ENCODE measurements at regions of chr6 and their contacts with region 1.

Region 1: DNA sequence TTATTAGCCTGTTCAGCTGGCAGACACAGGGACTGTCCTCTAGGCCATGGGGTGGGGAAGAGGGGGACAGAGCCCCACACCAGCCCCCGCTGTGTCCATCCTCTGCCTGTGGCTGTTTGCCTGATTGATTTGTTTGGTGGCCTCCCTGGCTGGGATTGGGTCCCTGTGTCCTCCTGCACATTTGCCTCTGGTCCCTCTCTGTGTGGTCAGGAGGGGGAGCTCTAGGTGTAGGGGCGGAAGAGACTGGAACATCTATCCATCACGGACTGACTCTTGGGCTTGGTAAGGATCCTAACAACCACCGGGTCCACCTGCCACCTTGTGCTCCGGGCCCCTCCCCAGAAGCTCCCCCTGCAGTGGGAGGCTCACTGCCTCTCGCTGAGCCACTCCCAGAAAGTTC is 38.4 kb upstream of the CCDC167 start:
- DNase-seq: peak; percentile 20
- H3K4me3 ChIP-seq: no peak overlapping the region
- H3K27ac ChIP-seq: no peak overlapping the region
- H3K4me1 ChIP-seq: peaks cover 7% of the 10 kb centered on the region
- H3K27me3 ChIP-seq: peaks cover 47 to 48% of the 10 kb centered on the region in 2 experiments
- CTCF ChIP-seq: peak; percentile 33 to 53
- POLR2A ChIP-seq: no peak

Region 2: DNA sequence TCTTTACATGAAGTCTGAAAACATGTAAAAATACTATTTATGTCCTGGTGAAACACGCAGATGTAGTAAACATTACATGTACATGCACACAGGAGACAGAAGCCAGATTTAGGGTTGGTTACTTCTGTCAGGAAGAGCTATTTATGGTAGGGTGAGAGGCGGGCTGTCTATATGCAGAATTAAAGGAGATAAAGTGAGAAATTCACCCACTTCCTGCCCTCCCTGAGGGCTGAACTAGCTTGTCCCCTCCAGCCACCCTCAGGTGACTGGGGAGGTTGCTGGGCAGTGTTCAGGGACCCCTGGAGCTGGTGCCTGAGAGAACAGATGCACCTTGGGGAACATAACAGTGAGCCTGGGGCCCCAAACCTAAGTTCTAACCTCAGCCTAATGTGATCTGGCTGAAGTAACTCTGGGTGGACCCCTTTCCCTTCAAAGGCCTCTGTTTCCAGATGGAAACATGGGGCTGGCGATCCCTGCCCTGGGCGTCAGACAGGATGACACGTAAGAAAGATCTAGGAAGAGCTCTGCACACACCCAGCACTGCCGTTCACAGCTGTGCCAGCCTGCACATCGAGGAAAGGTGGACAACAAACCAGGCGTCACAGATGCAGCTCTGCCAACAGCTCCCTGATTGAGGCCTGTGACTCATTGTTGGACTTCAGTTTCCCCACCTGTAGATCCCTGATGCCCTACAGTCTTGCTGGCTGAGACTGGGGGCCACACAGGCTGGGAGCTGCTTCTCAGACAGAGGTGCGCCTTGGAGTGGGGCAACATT is 582.2 kb before region 1 on chr6:
- CTCF ChIA-PET with region 1: no interaction called
- POLR2A ChIA-PET with region 1: no interaction called
- dilution Hi-C with region 1: no loop called
- intact Hi-C with region 1: no loop called
- DNase-seq: peak; percentile 29
- H3K4me3 ChIP-seq: no peak overlapping the region
- H3K27ac ChIP-seq: no peak overlapping the region
- H3K4me1 ChIP-seq: peaks cover 3% of the 10 kb centered on the region
- H3K27me3 ChIP-seq: no peaks in the 10 kb centered on the region
- CTCF ChIP-seq: no peak
- POLR2A ChIP-seq: no peak

Region 3: GRCh38 chr6:37381579-37381978 is 156.5 kb before region 1 on chr6:
- CTCF ChIA-PET with region 1: no interaction called
- POLR2A ChIA-PET with region 1: no interaction called
- dilution Hi-C with region 1: no loop called
- intact Hi-C with region 1: no loop called
- DNase-seq: peak; percentile 60
- H3K4me3 ChIP-seq: no peak overlapping the region
- H3K27ac ChIP-seq: no peak overlapping the region
- H3K4me1 ChIP-seq: no peaks in the 10 kb centered on the region
- H3K27me3 ChIP-seq: no peaks in the 10 kb centered on the region
- CTCF ChIP-seq: peak; percentile 45 to 52
- POLR2A ChIP-seq: no peak

Region 4: DNA sequence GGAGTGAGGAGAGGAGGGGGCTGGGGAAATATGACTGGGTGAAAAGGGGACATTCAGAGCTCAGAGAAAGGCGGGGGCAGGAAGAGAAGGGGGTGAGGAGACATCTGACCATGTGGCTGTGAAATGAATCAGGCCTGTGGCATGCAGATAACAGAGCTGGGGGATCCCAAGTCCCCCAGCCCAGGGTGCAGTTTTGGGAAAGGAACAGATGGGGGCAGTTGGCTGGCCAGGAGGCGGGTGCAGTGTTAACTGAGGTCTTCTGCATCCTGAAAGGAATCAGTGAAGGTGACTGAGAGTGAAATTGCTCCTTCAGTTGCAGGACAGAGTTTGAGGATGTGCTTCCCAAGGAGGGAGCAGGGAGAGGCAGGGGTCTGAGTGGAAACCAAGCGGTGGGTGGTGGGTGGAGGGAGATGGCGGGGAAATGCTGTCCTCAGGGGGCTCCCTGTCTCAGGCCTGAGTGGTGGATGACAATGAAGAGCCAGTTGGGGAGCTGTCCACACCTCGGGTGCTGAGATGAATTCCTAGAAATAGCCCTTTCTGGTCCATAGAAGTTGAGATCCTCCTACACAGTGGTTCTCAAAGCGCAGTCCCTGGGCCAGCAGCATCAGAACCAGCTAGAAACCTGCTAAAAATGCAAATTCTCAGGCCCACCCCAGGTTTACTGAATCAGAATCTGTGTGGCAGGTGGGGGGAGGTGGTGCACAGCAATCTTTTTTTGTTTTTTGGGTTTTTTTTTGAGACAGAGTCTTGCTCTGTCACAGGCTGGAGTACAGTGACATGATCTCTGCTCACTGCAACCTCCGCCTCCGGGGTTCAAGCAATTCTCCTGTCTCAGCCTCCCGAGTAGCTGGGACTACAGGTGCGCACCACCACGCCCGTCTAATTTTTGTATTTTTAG is 12.4 kb before region 1 on chr6:
- CTCF ChIA-PET with region 1: interaction called, 11 read pairs
- POLR2A ChIA-PET with region 1: no interaction called
- dilution Hi-C with region 1: no loop called
- intact Hi-C with region 1: no loop called
- DNase-seq: peak; percentile 30
- H3K4me3 ChIP-seq: no peak overlapping the region
- H3K27ac ChIP-seq: no peak overlapping the region
- H3K4me1 ChIP-seq: peaks cover 23% of the 10 kb centered on the region
- H3K27me3 ChIP-seq: peaks cover 5 to 16% of the 10 kb centered on the region in 2 experiments
- CTCF ChIP-seq: no peak
- POLR2A ChIP-seq: no peak

Region 5: DNA sequence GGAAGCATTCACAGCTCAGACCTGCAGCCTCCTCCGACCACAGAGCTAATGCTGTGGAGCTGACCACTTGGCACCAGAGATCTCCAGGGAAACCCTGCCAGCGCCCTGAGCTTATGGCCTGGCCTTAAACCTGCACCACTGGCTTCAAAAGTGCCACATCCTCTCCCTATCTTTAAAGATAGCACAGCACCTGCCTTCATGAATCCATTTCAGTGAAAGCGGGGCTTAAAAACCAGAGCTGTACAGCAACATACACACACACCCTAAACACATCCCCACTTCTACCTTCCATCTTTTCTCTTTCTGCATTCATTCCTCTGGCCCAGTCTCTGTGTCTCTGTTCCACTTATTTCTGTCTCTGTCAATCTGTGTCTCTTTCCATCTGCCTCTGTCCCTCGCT is 21.4 kb after region 1 on chr6:
- CTCF ChIA-PET with region 1: interaction called, 162 read pairs
- POLR2A ChIA-PET with region 1: no interaction called
- dilution Hi-C with region 1: no loop called
- intact Hi-C with region 1: no loop called
- DNase-seq: no peak
- H3K4me3 ChIP-seq: no peak overlapping the region
- H3K27ac ChIP-seq: no peak overlapping the region
- H3K4me1 ChIP-seq: no peaks in the 10 kb centered on the region
- H3K27me3 ChIP-seq: peaks cover 2 to 15% of the 10 kb centered on the region in 2 experiments
- CTCF ChIP-seq: no peak
- POLR2A ChIP-seq: no peak

Region 6: GRCh38 chr6:37653933-37654565 is 115.9 kb after region 1 on chr6:
- CTCF ChIA-PET with region 1: interaction called, 11 read pairs
- POLR2A ChIA-PET with region 1: no interaction called
- dilution Hi-C with region 1: no loop called
- intact Hi-C with region 1: no loop called
- DNase-seq: peak; percentile 47
- H3K4me3 ChIP-seq: no peak overlapping the region
- H3K27ac ChIP-seq: no peak overlapping the region
- H3K4me1 ChIP-seq: no peaks in the 10 kb centered on the region
- H3K27me3 ChIP-seq: peaks cover 8 to 22% of the 10 kb centered on the region in 2 experiments
- CTCF ChIP-seq: peak; percentile 54 to 77
- POLR2A ChIP-seq: no peak

Measured in endothelial cell of umbilical vein (primary cell).